ENCODE measurements at regions of chr5 and their contacts with region 1.

Region 1: DNA sequence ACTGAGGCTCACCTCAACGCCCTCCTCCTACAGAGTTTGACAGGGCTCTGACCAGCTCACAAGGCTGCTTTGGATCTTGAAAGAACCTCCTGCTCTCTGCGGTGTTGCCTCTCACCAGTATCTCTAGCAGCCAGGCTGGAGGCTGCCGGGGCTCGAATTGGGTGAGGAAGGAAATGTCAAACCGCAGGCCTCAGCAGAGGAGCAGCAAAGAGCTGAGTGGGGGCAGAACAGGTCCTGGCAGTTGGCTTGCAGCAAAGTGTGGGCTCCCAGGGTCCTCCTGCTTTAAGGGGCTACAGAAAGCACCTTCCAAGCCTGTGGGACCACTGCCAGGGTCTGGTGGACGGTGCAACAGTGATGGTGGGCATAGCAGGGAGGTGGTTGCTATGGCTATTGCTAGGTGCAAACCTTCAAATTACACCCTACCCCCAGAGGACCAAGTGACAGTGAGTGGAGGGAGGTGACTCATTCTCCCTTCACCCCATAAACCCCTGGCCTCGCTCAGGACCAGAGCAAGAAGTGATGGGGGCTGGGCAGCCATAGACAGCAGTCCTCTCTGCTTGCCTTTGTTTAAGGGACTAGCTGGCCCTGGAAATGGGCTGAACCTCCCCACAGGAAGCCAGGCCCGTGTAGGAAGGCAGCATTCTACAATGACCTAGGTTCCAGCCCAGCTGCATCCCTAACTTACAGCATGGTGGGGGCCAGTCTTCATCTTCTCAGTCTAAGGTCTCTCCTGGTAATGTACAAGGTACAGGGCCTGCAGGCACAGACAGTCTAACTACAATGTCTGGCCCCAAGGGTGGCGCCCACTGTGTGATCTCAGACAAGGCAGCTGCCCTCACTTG is 18.7 kb downstream of the LCP2 start:
- DNase-seq: peak; percentile 74 to 96 (median 93)
- H3K4me3 ChIP-seq: peak overlapping the region; percentile 55
- H3K4me3 Mint-ChIP-seq: peak overlapping the region; percentile 63 to 89 (median 85)
- H3K27ac ChIP-seq: peak overlapping the region; percentile 65
- H3K27ac Mint-ChIP-seq: peak overlapping the region; percentile 93 to 99 (median 97)
- H3K4me1 ChIP-seq: peaks cover 96% of the 10 kb centered on the region
- H3K4me1 Mint-ChIP-seq: peaks cover 94 to 99% (median 99%) of the 10 kb centered on the region in 3 donors
- H3K27me3 ChIP-seq: no peaks in the 10 kb centered on the region
- H3K27me3 Mint-ChIP-seq: peaks cover 0 to 1% of the 10 kb centered on the region in 2 donors

Region 2: DNA sequence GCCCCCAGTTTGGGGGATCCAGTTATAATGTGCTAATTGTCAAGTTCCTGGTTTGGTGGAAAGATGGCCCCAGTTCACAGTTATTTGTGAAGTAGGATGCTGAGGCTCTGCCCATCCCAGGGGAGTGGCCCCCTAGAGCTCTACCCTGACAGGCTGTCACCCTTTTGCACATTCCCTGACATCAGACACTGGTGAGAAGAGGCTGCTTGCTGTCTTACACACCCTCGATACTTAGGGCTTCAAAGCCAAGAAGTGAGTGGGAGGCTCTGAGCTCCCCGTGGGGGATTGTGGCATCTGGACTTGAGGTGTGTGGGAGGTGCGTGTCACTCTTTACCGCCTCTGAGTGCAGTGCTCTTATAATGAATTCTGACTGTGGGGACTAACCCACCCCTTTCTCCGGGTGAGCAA is 473.3 kb before region 1 on chr5:
- CTCF ChIA-PET with region 1: no interaction called
- POLR2A ChIA-PET with region 1: no interaction called
- DNase-seq: peak in 2 of 5 donors; percentile 4 to 7
- H3K4me3 ChIP-seq: no peak overlapping the region
- H3K4me3 Mint-ChIP-seq: peak overlapping the region in 1 of 7 donors; percentile 32
- H3K27ac ChIP-seq: no peak overlapping the region
- H3K27ac Mint-ChIP-seq: peak overlapping the region in 5 of 8 donors; percentile 20 to 63 (median 31)
- H3K4me1 ChIP-seq: peaks cover 13% of the 10 kb centered on the region
- H3K4me1 Mint-ChIP-seq: peaks cover 41 to 56% (median 53%) of the 10 kb centered on the region in 3 donors
- H3K27me3 ChIP-seq: no peaks in the 10 kb centered on the region
- H3K27me3 Mint-ChIP-seq: no peaks in the 10 kb centered on the region

Region 3: GRCh38 chr5:170070556-170071412 is 208.0 kb before region 1 on chr5:
- CTCF ChIA-PET with region 1: no interaction called
- POLR2A ChIA-PET with region 1: no interaction called
- DNase-seq: no peak
- H3K4me3 ChIP-seq: no peak overlapping the region
- H3K4me3 Mint-ChIP-seq: no peak overlapping the region
- H3K27ac ChIP-seq: no peak overlapping the region
- H3K27ac Mint-ChIP-seq: peak overlapping the region in 1 of 8 donors; percentile 15
- H3K4me1 ChIP-seq: no peaks in the 10 kb centered on the region
- H3K4me1 Mint-ChIP-seq: no peaks in the 10 kb centered on the region
- H3K27me3 ChIP-seq: no peaks in the 10 kb centered on the region
- H3K27me3 Mint-ChIP-seq: no peaks in the 10 kb centered on the region

Region 4: GRCh38 chr5:170262061-170263045 is 16.5 kb before region 1 on chr5:
- CTCF ChIA-PET with region 1: interaction called, 49 read pairs
- POLR2A ChIA-PET with region 1: interaction called, 21 read pairs
- DNase-seq: peak in 4 of 5 donors; percentile 40 to 88 (median 78)
- H3K4me3 ChIP-seq: no peak overlapping the region
- H3K4me3 Mint-ChIP-seq: peak overlapping the region; percentile 54 to 80 (median 76)
- H3K27ac ChIP-seq: no peak overlapping the region
- H3K27ac Mint-ChIP-seq: peak overlapping the region; percentile 91 to 98 (median 96)
- H3K4me1 ChIP-seq: peaks cover 76% of the 10 kb centered on the region
- H3K4me1 Mint-ChIP-seq: peaks cover 80 to 91% (median 91%) of the 10 kb centered on the region in 3 donors
- H3K27me3 ChIP-seq: no peaks in the 10 kb centered on the region
- H3K27me3 Mint-ChIP-seq: peaks cover 0 to 2% of the 10 kb centered on the region in 2 donors

Region 5: GRCh38 chr5:170302653-170303501 is 24.0 kb after region 1 on chr5:
- CTCF ChIA-PET with region 1: interaction called, 292 read pairs
- POLR2A ChIA-PET with region 1: interaction called, 290 read pairs
- DNase-seq: peak; percentile 65 to 86 (median 81)
- H3K4me3 ChIP-seq: peak overlapping the region; percentile 61
- H3K4me3 Mint-ChIP-seq: peak overlapping the region; percentile 78 to 94 (median 86)
- H3K27ac ChIP-seq: peak overlapping the region; percentile 40
- H3K27ac Mint-ChIP-seq: peak overlapping the region; percentile 89 to 100 (median 95)
- H3K4me1 ChIP-seq: peaks cover 68% of the 10 kb centered on the region
- H3K4me1 Mint-ChIP-seq: peaks cover 58 to 78% (median 73%) of the 10 kb centered on the region in 3 donors
- H3K27me3 ChIP-seq: no peaks in the 10 kb centered on the region
- H3K27me3 Mint-ChIP-seq: no peaks in the 10 kb centered on the region

Measured in CD8-positive, alpha-beta memory T cell (primary cell).